ENCODE measurements at regions of chr1 and their contacts with region 1.

Region 1: DNA sequence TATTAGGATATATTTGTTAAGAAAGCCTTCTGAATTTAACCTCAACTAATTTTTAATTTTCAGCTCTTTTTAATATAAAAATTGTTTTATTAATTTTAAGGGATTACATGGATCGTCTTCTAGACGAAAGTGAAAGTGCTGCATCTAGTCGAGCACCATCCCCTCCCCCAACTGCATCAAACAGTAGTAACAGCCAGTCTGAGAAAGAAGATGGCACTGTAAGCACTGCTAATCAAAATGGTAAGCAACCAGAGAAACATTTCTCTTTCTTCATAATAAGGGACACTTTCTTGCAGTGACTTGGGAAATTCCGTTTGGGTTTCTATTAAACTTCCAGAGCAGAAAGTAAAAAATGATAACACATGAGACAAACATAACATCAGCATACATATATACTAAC is 56.9 kb downstream of the MIER1 start:
- DNase-seq: peak; percentile 18 to 87 (median 42)
- ATAC-seq: peak; percentile 93
- H3K4me3 ChIP-seq: peak overlapping the region; percentile 52
- H3K4me3 Mint-ChIP-seq: peak overlapping the region; percentile 66
- H3K27ac ChIP-seq: peak overlapping the region; percentile 5 to 78
- H3K27ac Mint-ChIP-seq: peak overlapping the region; percentile 89
- H3K4me1 ChIP-seq: no peaks in the 10 kb centered on the region
- H3K4me1 Mint-ChIP-seq: peaks cover 40% of the 10 kb centered on the region
- H3K27me3 ChIP-seq: no peaks in the 10 kb centered on the region
- H3K27me3 Mint-ChIP-seq: no peaks in the 10 kb centered on the region
- CTCF ChIP-seq: no peak

Region 2: GRCh38 chr1:66585002-66585401 is 396.7 kb before region 1 on chr1:
- CTCF ChIA-PET with region 1: no interaction called
- POLR2A ChIA-PET with region 1: no interaction called
- intact Hi-C with region 1: no loop called
- DNase-seq: no peak
- ATAC-seq: no peak
- H3K4me3 ChIP-seq: no peak overlapping the region
- H3K4me3 Mint-ChIP-seq: no peak overlapping the region
- H3K27ac ChIP-seq: no peak overlapping the region
- H3K27ac Mint-ChIP-seq: no peak overlapping the region
- H3K4me1 ChIP-seq: no peaks in the 10 kb centered on the region
- H3K4me1 Mint-ChIP-seq: no peaks in the 10 kb centered on the region
- H3K27me3 ChIP-seq: no peaks in the 10 kb centered on the region
- H3K27me3 Mint-ChIP-seq: peaks cover 9% of the 10 kb centered on the region
- CTCF ChIP-seq: no peak

Region 3: DNA sequence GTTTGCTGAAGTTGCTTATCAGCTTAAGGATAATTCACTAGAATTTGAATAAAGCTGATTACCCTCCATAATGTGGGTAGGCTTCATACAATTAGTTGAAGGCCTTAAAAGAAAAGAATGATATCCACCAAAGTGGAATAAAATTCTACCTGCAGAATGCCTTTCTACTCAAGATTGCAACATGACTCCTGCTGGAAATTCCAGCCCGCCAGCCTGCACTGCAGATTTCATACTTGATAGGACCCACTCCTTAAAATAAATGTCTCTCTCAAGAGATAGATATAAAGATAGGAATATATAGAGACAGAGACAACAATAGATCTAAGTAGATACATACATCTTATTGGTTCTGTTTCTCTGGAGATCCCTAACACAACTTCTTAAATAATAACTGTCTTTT is 156.9 kb before region 1 on chr1:
- CTCF ChIA-PET with region 1: no interaction called
- POLR2A ChIA-PET with region 1: no interaction called
- intact Hi-C with region 1: no loop called
- DNase-seq: no peak
- ATAC-seq: no peak
- H3K4me3 ChIP-seq: no peak overlapping the region
- H3K4me3 Mint-ChIP-seq: no peak overlapping the region
- H3K27ac ChIP-seq: no peak overlapping the region
- H3K27ac Mint-ChIP-seq: no peak overlapping the region
- H3K4me1 ChIP-seq: no peaks in the 10 kb centered on the region
- H3K4me1 Mint-ChIP-seq: no peaks in the 10 kb centered on the region
- H3K27me3 ChIP-seq: no peaks in the 10 kb centered on the region
- H3K27me3 Mint-ChIP-seq: no peaks in the 10 kb centered on the region
- CTCF ChIP-seq: no peak

Region 4: GRCh38 chr1:66848193-66848592 is 133.5 kb before region 1 on chr1:
- CTCF ChIA-PET with region 1: no interaction called
- POLR2A ChIA-PET with region 1: no interaction called
- intact Hi-C with region 1: no loop called
- DNase-seq: no peak
- ATAC-seq: no peak
- H3K4me3 ChIP-seq: no peak overlapping the region
- H3K4me3 Mint-ChIP-seq: no peak overlapping the region
- H3K27ac ChIP-seq: no peak overlapping the region
- H3K27ac Mint-ChIP-seq: no peak overlapping the region
- H3K4me1 ChIP-seq: no peaks in the 10 kb centered on the region
- H3K4me1 Mint-ChIP-seq: no peaks in the 10 kb centered on the region
- H3K27me3 ChIP-seq: no peaks in the 10 kb centered on the region
- H3K27me3 Mint-ChIP-seq: no peaks in the 10 kb centered on the region
- CTCF ChIP-seq: no peak

Region 5: DNA sequence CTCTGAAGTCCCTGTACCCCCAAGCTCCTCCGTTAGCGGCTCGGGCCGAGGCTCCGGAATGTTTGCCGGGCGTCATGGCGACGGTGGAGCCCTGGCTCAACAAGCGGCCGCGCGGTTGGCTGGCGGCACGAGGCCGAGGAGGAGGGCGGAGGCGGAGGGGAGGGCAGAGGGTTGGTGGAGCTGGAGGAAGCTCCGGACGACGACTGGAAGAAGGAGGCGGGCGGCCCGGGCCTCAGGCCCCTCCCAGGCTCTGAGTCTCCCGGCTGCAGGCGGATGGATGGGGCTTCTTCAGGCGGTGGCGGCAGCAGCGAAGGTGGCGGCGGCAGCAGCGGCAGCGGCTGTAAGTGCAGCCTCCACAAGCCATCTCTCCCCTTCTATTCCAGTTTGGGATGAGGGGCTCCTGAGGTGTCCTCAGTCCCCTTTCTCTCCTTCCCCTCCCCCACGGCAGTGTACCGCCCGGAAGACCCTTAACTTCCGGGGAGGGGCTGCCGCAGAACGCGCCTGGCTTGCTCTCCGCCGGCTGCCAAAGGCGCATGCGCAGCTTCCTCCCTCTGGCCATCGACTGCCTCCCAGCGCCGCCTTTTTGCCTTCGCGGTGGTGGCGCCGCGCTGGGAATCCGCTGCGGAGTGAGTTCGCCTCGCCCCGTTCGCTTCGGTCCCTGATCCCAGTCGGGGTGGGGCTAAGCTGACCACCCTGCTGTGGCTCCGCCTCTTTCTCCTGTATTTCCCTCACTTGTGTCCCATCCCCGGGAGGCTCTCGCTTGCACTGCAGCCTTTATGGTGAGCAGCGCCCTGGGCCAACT is 56.7 kb before region 1 on chr1 and contains the starts of genes DNAI4 and MIER1:
- CTCF ChIA-PET with region 1: no interaction called
- POLR2A ChIA-PET with region 1: interaction called, 12 read pairs
- intact Hi-C with region 1: no loop called
- DNase-seq: peak; percentile 90 to 99 (median 95)
- ATAC-seq: peak; percentile 89
- H3K4me3 ChIP-seq: peak within 1 kb of the TSS; percentile 92
- H3K4me3 Mint-ChIP-seq: peak within 1 kb of the TSS; percentile 97
- H3K27ac ChIP-seq: peak within 1 kb of the TSS; percentile 95 to 99
- H3K27ac Mint-ChIP-seq: peak within 1 kb of the TSS; percentile 98
- H3K4me1 ChIP-seq: peaks cover 24% of the 10 kb centered on the region
- H3K4me1 Mint-ChIP-seq: peaks cover 67% of the 10 kb centered on the region
- H3K27me3 ChIP-seq: no peaks in the 10 kb centered on the region
- H3K27me3 Mint-ChIP-seq: no peaks in the 10 kb centered on the region
- CTCF ChIP-seq: no peak
- total RNA-seq, gene DNAI4: 5.0 to 8.8 TPM
- total RNA-seq, gene MIER1: 106 to 107 TPM

Region 6: DNA sequence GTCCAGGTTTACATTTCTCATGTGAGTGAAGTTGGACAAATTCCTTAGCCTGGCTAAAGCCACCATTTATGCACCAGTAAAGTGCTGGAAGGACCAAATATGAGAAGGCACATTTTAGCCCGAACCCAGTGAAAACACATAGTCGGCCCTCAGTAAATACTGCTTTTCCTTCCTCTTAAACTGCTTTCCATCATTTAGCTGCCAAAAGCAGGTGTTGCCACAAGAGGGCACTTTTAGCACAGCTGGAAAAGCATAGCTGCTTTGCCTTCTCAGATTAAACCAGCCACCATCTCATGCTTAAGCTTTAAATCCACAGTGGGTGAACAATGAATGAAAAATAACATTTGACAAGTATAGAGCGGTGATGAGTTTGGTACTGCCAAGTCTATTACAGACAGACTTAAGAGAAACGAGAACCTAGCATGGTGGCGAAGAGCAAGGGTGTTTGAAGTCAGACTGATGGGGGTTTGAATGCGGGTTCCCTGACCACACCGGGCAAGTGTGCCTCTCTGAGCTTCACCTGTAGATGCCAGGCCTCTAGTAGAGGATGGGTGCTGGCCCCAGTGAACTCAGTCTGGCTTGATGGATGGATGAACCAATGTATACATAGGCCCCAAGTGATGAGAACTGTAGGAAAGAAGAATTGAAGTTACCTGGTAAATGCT is 14.5 kb after region 1 on chr1:
- CTCF ChIA-PET with region 1: interaction called, 3 read pairs
- POLR2A ChIA-PET with region 1: interaction called, 11 read pairs
- intact Hi-C with region 1: no loop called
- DNase-seq: peak; percentile 32 to 78 (median 52)
- ATAC-seq: peak; percentile 89
- H3K4me3 ChIP-seq: no peak overlapping the region
- H3K4me3 Mint-ChIP-seq: no peak overlapping the region
- H3K27ac ChIP-seq: no peak overlapping the region
- H3K27ac Mint-ChIP-seq: peak overlapping the region; percentile 2
- H3K4me1 ChIP-seq: peaks cover 5% of the 10 kb centered on the region
- H3K4me1 Mint-ChIP-seq: peaks cover 28% of the 10 kb centered on the region
- H3K27me3 ChIP-seq: no peaks in the 10 kb centered on the region
- H3K27me3 Mint-ChIP-seq: no peaks in the 10 kb centered on the region
- CTCF ChIP-seq: peak; percentile 73

Region 7: GRCh38 chr1:67307251-67308060 is 325.8 kb after region 1 on chr1 and contains the start of gene IL12RB2:
- CTCF ChIA-PET with region 1: no interaction called
- POLR2A ChIA-PET with region 1: no interaction called
- intact Hi-C with region 1: no loop called
- DNase-seq: peak in 9 of 14 experiments; percentile 4 to 69 (median 34)
- ATAC-seq: peak; percentile 68
- H3K4me3 ChIP-seq: peak within 1 kb of the TSS; percentile 55
- H3K4me3 Mint-ChIP-seq: peak within 1 kb of the TSS; percentile 85
- H3K27ac ChIP-seq: no peak within 1 kb of the TSS
- H3K27ac Mint-ChIP-seq: peak within 1 kb of the TSS; percentile 34
- H3K4me1 ChIP-seq: peaks cover 14% of the 10 kb centered on the region
- H3K4me1 Mint-ChIP-seq: peaks cover 15% of the 10 kb centered on the region
- H3K27me3 ChIP-seq: peaks cover 3 to 5% of the 10 kb centered on the region in 2 experiments
- H3K27me3 Mint-ChIP-seq: peaks cover 37% of the 10 kb centered on the region
- CTCF ChIP-seq: no peak
- total RNA-seq, gene IL12RB2: 0.98 to 1.2 TPM

Region 8: GRCh38 chr1:67418839-67419586 is 437.3 kb after region 1 on chr1:
- CTCF ChIA-PET with region 1: no interaction called
- POLR2A ChIA-PET with region 1: interaction called, 3 read pairs
- intact Hi-C with region 1: loop called in 1 of 2 experiments (anchors 5 kb)
- DNase-seq: no peak
- ATAC-seq: no peak
- H3K4me3 ChIP-seq: no peak overlapping the region
- H3K4me3 Mint-ChIP-seq: no peak overlapping the region
- H3K27ac ChIP-seq: no peak overlapping the region
- H3K27ac Mint-ChIP-seq: peak overlapping the region; percentile 60
- H3K4me1 ChIP-seq: peaks cover 19% of the 10 kb centered on the region
- H3K4me1 Mint-ChIP-seq: peaks cover 65% of the 10 kb centered on the region
- H3K27me3 ChIP-seq: no peaks in the 10 kb centered on the region
- H3K27me3 Mint-ChIP-seq: no peaks in the 10 kb centered on the region
- CTCF ChIP-seq: no peak

Measured in CD4-positive, alpha-beta T cell (primary cell).